ENCODE measurements at regions of chr6 and their contacts with region 1.

Region 1: GRCh38 chr6:31163922-31164321 is 5.5 kb downstream of the TCF19 start:
- DNase-seq: no peak
- ATAC-seq: peak; percentile 8; the same call in 1 of the 3 replicates
- H3K4me3 ChIP-seq: no peak overlapping the region
- H3K27ac ChIP-seq: peak overlapping the region; percentile 52
- H3K4me1 ChIP-seq: peaks cover 32% of the 10 kb centered on the region
- H3K27me3 ChIP-seq: no peaks in the 10 kb centered on the region
- CTCF ChIP-seq: no peak
- EP300 ChIP-seq: no peak
- POLR2A ChIP-seq: no peak
- RAD21 ChIP-seq: no peak

Region 2: GRCh38 chr6:31180502-31180901 is 16.6 kb after region 1 on chr6:
- CTCF ChIA-PET with region 1: interaction called, 17 read pairs
- POLR2A ChIA-PET with region 1: interaction called, 10 read pairs
- RAD21 ChIA-PET with region 1: interaction called, 10 read pairs
- SMC1A ChIA-PET with region 1: interaction called, 21 read pairs
- in situ Hi-C with region 1: no loop called
- intact Hi-C with region 1: no loop called
- DNase-seq: no peak
- ATAC-seq: no peak
- H3K4me3 ChIP-seq: no peak overlapping the region
- H3K27ac ChIP-seq: no peak overlapping the region
- H3K4me1 ChIP-seq: peaks cover 14% of the 10 kb centered on the region
- H3K27me3 ChIP-seq: no peaks in the 10 kb centered on the region
- CTCF ChIP-seq: no peak
- EP300 ChIP-seq: no peak
- POLR2A ChIP-seq: no peak
- RAD21 ChIP-seq: no peak

Measured in GM12878 (cell line).